Mammary epithelial cell (primary cell): ENCODE measurements at regions of chr2 and their contacts with region 1.

Region 1: GRCh38 chr2:128736689-128737545 is 418.2 kb upstream of the HS6ST1 start:
- DNase-seq: peak; percentile 49
- H3K4me3 ChIP-seq: peak overlapping the region in 2 of 3 experiments; percentile 28 to 45
- H3K27ac ChIP-seq: no peak overlapping the region
- H3K4me1 ChIP-seq: peaks cover 13% of the 10 kb centered on the region
- H3K27me3 ChIP-seq: no peaks in the 10 kb centered on the region
- CTCF ChIP-seq: peak; percentile 90 to 100

Region 2: DNA sequence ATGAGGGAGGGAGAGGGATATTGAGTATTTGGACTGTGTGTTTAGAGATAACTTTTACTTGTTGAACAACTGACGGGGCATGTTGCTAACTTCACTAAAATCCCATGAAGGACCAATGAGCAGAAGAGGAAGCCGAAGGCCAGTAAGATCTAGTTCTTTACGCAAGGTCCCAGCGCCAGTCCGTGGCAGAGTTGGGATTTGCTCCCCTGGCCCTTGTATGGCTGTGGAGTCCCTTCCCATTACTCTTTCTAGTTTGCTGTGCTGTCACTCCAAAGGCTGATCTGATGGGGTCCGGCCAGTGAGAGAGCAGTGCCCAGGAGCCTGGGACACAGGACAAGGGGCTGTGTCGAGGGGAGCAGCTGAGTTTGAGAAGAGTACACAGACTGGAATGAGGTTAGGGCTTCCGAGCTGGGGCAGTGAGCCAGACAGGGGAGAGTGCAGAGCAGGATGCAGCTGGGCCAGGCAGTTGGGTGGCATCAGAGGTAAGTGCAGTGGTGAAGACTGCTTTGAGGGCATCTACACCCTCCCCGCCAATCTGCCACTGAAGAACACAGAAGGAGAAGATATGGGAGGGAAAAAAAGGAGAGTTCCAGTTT is 274.6 kb after region 1 on chr2:
- CTCF ChIA-PET with region 1: no interaction called
- dilution Hi-C with region 1: no loop called
- in situ Hi-C with region 1: no loop called
- intact Hi-C with region 1: no loop called
- DNase-seq: no peak
- H3K4me3 ChIP-seq: no peak overlapping the region
- H3K27ac ChIP-seq: no peak overlapping the region
- H3K4me1 ChIP-seq: peaks cover 19% of the 10 kb centered on the region
- H3K27me3 ChIP-seq: no peaks in the 10 kb centered on the region
- CTCF ChIP-seq: no peak

Region 3: DNA sequence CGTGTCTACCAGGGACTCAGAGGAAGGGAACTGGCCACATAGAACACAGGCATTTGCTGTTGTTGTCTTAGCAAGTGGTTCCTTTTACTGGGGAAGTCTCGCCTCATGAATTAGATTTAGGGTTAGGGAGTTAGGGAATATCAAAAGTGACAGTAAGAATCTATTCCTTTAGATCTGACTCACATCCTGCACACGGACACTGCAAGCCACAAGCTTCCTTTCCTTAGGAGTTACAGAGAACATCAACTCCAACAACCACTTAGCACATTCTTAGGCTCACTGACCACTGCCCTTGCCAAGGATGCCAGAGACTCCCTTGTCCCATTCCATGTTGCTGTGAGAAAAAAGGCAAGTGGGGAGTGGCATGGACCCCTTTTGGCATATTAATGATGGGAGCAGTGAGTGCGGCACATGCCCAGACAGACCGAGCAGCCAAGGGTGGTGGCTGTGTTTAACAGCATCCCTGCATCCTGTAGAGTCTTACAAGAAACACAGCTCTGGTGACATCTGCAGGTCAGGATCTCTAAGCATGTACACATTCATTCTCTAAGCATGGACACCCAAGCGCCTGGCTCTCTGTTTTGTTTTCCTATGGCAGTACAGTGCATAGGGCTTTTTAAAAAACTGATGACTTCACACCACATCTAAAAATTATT is 497.0 kb after region 1 on chr2:
- CTCF ChIA-PET with region 1: no interaction called
- dilution Hi-C with region 1: no loop called
- in situ Hi-C with region 1: loop called (anchors 25 kb)
- intact Hi-C with region 1: loop called (anchors 1 kb)
- DNase-seq: peak; percentile 42
- H3K4me3 ChIP-seq: no peak overlapping the region
- H3K27ac ChIP-seq: no peak overlapping the region
- H3K4me1 ChIP-seq: peaks cover 9% of the 10 kb centered on the region
- H3K27me3 ChIP-seq: no peaks in the 10 kb centered on the region
- CTCF ChIP-seq: peak in 1 of 2 donors; percentile 49

Region 4: DNA sequence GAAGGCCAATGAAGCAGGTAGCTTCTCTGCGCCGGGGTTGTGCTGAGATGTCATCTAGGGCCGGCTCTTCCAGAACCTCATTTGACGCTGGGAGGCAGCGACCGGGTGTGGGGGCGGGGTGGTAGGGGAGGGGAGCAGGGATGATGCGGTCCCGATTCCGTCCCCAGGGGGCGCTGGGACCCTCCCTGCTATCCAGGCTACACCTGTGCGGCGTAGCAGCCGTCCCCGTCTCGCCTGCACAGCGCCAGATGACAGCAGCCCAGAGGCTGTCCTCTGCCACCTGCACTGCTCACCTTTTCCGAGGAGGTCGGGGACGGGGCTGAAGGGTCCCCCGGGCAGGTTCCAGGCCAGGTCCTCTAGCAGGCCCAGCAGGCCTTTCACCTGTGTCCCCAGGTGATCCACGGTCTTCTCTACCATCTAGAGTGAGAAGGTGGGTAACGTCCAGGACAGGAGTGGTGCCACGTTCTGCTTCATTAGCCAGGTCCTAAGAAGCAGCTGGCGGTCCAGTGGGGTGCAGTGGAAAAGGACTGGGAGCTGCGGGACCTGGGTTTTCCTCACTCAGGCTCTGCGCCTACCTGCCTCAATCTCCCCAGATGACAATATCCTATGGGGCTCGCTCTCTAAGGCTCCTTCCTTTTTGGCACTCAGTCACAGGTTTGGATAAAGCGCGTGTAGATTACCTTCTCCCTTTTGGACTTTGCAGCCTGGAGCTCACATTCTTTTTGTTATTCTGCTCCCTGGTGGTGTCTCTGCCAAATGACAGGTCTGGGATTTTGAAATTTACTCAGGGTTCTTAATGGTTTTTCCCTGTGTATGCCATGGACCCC is 1186.6 kb after region 1 on chr2:
- CTCF ChIA-PET with region 1: interaction called, 3 read pairs
- dilution Hi-C with region 1: no loop called
- in situ Hi-C with region 1: no loop called
- intact Hi-C with region 1: loop called (anchors 10 kb)
- DNase-seq: peak; percentile 25
- H3K4me3 ChIP-seq: no peak overlapping the region
- H3K27ac ChIP-seq: no peak overlapping the region
- H3K4me1 ChIP-seq: no peaks in the 10 kb centered on the region
- H3K27me3 ChIP-seq: peaks cover 6% of the 10 kb centered on the region
- CTCF ChIP-seq: peak; percentile 53 to 56